Caco-2 (cell line): ENCODE measurements at regions of chr12 and their contacts with region 1.

Region 1: GRCh38 chr12:9049520-9050133 is 60.3 kb downstream of the KLRG1 start:
- DNase-seq: peak in 1 of 2 experiments; percentile 56
- H3K4me3 ChIP-seq: no peak overlapping the region
- H3K4me3 Mint-ChIP-seq: no peak overlapping the region
- H3K27ac Mint-ChIP-seq: no peak overlapping the region
- H3K4me1 ChIP-seq: no peaks in the 10 kb centered on the region
- H3K4me1 Mint-ChIP-seq: no peaks in the 10 kb centered on the region
- H3K27me3 ChIP-seq: no peaks in the 10 kb centered on the region
- H3K27me3 Mint-ChIP-seq: peaks cover 33% of the 10 kb centered on the region
- CTCF ChIP-seq: peak; percentile 68 to 82

Region 2: DNA sequence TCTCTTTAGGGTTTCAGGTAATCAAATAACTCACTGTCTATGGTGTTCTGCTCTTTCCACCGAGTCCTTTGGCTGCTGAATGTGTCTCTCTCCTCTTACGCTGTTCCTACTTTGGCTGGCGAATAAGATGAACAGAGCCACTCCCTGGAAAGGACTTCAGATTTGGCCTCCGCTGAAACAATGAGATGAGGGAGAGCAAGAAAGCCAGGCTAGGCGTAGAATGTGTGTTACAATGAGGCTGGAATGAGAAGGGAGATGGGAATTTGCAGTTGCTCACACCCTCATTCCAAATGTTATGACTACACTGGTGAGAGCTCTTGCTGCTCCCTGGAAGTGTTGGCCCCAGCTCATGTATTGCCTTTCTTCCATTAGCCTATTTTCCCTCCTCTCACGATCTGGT is 387.0 kb before region 1 on chr12 and contains the start of gene MFAP5:
- CTCF ChIA-PET with region 1: interaction called, 29 read pairs
- POLR2A ChIA-PET with region 1: no interaction called
- intact Hi-C with region 1: loop called (anchors 10 kb)
- DNase-seq: no peak
- H3K4me3 ChIP-seq: no peak within 1 kb of the TSS
- H3K4me3 Mint-ChIP-seq: no peak within 1 kb of the TSS
- H3K27ac Mint-ChIP-seq: no peak within 1 kb of the TSS
- H3K4me1 ChIP-seq: no peaks in the 10 kb centered on the region
- H3K4me1 Mint-ChIP-seq: no peaks in the 10 kb centered on the region
- H3K27me3 ChIP-seq: peaks cover 2% of the 10 kb centered on the region; the same call in 1 of the 2 replicates
- H3K27me3 Mint-ChIP-seq: peaks cover 9% of the 10 kb centered on the region
- CTCF ChIP-seq: no peak
- total RNA-seq, gene MFAP5: 0.61 and 1.00 TPM in 2 replicates

Region 3: DNA sequence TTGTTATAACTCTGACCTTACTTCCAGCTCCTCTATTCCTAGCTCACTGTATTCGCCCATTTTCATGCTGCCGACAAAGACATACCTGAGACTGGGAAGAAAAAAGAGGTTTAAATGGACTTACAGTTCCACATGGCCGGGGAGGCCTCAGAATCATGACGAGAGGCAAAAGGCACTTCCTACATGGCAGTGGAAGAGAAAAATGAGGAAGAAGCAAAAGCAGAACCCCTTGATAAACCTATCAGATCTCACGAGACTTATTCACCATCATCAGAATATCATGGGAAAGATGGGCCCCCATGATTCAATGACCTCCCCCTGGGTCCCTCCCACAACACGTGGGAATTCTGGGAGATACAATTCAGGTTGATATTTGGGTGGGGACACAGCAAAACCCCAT is 149.8 kb before region 1 on chr12:
- CTCF ChIA-PET with region 1: no interaction called
- POLR2A ChIA-PET with region 1: no interaction called
- intact Hi-C with region 1: no loop called
- DNase-seq: no peak
- H3K4me3 ChIP-seq: no peak overlapping the region
- H3K4me3 Mint-ChIP-seq: no peak overlapping the region
- H3K27ac Mint-ChIP-seq: no peak overlapping the region
- H3K4me1 ChIP-seq: no peaks in the 10 kb centered on the region
- H3K4me1 Mint-ChIP-seq: no peaks in the 10 kb centered on the region
- H3K27me3 ChIP-seq: 0 out of 2 replicates have a peak, but pooled peaks cover 1% of the 10 kb centered on the region
- H3K27me3 Mint-ChIP-seq: peaks cover 14% of the 10 kb centered on the region
- CTCF ChIP-seq: no peak

Region 4: GRCh38 chr12:8996682-8997360 is 52.8 kb before region 1 on chr12:
- CTCF ChIA-PET with region 1: no interaction called
- POLR2A ChIA-PET with region 1: no interaction called
- intact Hi-C with region 1: no loop called
- DNase-seq: no peak
- H3K4me3 ChIP-seq: no peak overlapping the region
- H3K4me3 Mint-ChIP-seq: no peak overlapping the region
- H3K27ac Mint-ChIP-seq: no peak overlapping the region
- H3K4me1 ChIP-seq: no peaks in the 10 kb centered on the region
- H3K4me1 Mint-ChIP-seq: no peaks in the 10 kb centered on the region
- H3K27me3 ChIP-seq: no peaks in the 10 kb centered on the region
- H3K27me3 Mint-ChIP-seq: peaks cover 4% of the 10 kb centered on the region
- CTCF ChIP-seq: no peak

Region 5: GRCh38 chr12:9221483-9221882 is 171.9 kb after region 1 on chr12:
- CTCF ChIA-PET with region 1: no interaction called
- POLR2A ChIA-PET with region 1: no interaction called
- intact Hi-C with region 1: no loop called
- DNase-seq: no peak
- H3K4me3 ChIP-seq: no peak overlapping the region
- H3K4me3 Mint-ChIP-seq: no peak overlapping the region
- H3K27ac Mint-ChIP-seq: no peak overlapping the region
- H3K4me1 ChIP-seq: no peaks in the 10 kb centered on the region
- H3K4me1 Mint-ChIP-seq: no peaks in the 10 kb centered on the region
- H3K27me3 ChIP-seq: no peaks in the 10 kb centered on the region
- H3K27me3 Mint-ChIP-seq: no peaks in the 10 kb centered on the region
- CTCF ChIP-seq: no peak